HEK293 (cell line): ENCODE measurements at regions of chr2 and their contacts with region 1.

Region 1: GRCh38 chr2:113198790-113199612 is 25.2 kb downstream of the PSD4 start:
- H3K4me3 ChIP-seq: peak overlapping the region; percentile 75
- H3K27ac ChIP-seq: peak overlapping the region; percentile 66; the same call in 1 of the 2 replicates
- H3K4me1 ChIP-seq: no peaks in the 10 kb centered on the region
- CTCF ChIP-seq: peak; percentile 99

Region 2: GRCh38 chr2:113080134-113080533 is 118.9 kb before region 1 on chr2:
- CTCF ChIA-PET with region 1: interaction called, 27 read pairs
- POLR2A ChIA-PET with region 1: no interaction called
- H3K4me3 ChIP-seq: no peak overlapping the region
- H3K27ac ChIP-seq: no peak overlapping the region
- H3K4me1 ChIP-seq: no peaks in the 10 kb centered on the region
- CTCF ChIP-seq: no peak

Region 3: DNA sequence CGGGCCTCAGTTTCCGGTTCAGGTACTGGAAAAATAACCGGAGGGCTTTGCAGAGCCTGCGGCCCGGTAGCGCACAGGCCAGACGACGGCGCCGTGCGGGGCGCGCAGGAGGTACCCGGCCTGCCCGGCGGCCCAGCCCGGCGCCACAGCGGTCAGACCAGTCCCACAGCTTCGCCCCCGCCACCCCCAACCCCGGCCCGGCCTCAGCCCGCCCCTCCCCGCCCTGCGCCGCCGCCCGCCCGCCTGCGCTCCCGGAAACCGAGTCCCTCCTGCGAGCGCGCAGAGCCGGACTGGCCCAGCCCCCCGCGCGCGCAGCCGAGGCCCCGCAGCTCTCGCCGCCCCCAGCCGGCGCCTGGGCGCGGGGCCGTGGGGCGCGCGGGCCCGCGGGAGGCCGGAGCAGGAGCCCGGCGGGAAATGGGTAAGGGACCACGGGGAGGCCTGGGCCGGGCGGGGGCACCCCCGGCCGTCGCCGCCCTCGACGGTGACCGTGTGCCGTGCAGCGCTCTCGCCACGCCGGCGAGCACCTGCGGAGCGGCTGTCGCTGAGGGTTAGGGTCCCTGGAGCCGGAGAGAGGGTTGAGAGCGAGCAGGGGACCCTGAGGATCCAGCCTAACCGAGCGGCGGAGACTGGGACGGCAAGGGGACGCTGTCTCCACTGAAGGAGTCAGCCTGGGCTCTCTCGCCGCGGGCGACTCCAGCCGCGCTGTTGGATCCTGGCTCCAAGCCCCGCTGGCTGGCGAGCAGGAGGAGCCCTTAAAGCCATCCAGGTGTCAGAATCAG is 41.7 kb before region 1 on chr2:
- CTCF ChIA-PET with region 1: interaction called, 21 read pairs
- POLR2A ChIA-PET with region 1: interaction called, 4 read pairs
- H3K4me3 ChIP-seq: peak overlapping the region; percentile 20
- H3K27ac ChIP-seq: peak overlapping the region; percentile 69; the same call in 1 of the 2 replicates
- H3K4me1 ChIP-seq: no peaks in the 10 kb centered on the region; the same call in 1 of the 2 replicates
- CTCF ChIP-seq: peak; percentile 22; the same call in 1 of the 2 replicates

Region 4: DNA sequence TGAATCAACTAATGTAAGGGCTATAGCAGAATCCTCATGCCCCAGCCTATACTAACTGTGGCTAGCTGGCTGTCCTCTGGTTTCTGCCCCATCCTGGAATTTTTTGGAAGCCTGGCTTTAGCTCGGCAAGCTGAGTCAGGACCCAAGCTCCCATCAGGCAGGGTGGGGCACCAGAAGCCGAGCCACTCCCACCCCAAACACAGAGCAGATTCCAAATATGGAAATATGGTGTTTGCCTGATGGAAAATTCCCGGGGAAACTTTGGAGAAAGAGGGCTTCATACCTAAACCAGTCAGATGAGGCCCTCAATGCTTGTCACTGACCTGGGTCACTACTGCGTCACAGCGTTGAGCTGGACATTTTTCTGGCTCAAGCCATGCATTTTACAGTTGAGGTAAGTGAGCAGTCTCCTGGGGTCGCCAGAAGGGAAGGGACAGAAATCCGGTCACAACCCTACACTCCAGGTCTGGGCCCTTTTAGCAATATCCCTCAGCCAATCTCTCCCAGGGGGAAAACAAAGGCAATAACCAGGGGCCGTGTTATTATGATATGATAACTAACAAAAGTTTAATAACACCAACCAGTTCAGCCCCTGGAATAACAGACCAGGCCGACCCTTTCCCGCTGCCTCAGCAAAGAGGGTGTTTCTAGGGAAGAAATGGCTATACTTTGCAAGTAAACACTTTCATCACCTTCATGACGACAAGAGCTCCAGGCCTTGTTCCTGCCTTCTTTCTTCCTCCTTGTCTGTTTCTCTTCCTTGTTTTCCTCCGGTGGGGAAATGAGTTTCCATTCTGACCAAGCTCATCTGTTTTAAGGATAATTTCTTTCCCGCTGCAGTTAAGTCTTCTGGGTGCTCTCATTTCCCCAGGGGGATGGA is 12.5 kb after region 1 on chr2:
- CTCF ChIA-PET with region 1: interaction called, 16 read pairs
- POLR2A ChIA-PET with region 1: no interaction called
- H3K4me3 ChIP-seq: no peak overlapping the region
- H3K27ac ChIP-seq: no peak overlapping the region
- H3K4me1 ChIP-seq: peaks cover 13% of the 10 kb centered on the region
- CTCF ChIP-seq: no peak

Region 5: GRCh38 chr2:113248997-113249770 is 50.2 kb after region 1 on chr2:
- CTCF ChIA-PET with region 1: interaction called, 22 read pairs
- POLR2A ChIA-PET with region 1: no interaction called
- H3K4me3 ChIP-seq: no peak overlapping the region
- H3K27ac ChIP-seq: no peak overlapping the region
- H3K4me1 ChIP-seq: no peaks in the 10 kb centered on the region
- CTCF ChIP-seq: peak; percentile 65